Posterior vena cava (tissue), 2 donors: ENCODE measurements at regions of chr5 and their contacts with region 1.

Region 1: GRCh38 chr5:36599986-36600779 is 6.2 kb upstream of the SLC1A3 start:
- DNase-seq: no peak

Region 2: GRCh38 chr5:36619012-36619635 is 18.9 kb after region 1 on chr5:
- intact Hi-C with region 1: loop called in 1 of 2 experiments (anchors 2 kb)
- DNase-seq: no peak

Region 3: DNA sequence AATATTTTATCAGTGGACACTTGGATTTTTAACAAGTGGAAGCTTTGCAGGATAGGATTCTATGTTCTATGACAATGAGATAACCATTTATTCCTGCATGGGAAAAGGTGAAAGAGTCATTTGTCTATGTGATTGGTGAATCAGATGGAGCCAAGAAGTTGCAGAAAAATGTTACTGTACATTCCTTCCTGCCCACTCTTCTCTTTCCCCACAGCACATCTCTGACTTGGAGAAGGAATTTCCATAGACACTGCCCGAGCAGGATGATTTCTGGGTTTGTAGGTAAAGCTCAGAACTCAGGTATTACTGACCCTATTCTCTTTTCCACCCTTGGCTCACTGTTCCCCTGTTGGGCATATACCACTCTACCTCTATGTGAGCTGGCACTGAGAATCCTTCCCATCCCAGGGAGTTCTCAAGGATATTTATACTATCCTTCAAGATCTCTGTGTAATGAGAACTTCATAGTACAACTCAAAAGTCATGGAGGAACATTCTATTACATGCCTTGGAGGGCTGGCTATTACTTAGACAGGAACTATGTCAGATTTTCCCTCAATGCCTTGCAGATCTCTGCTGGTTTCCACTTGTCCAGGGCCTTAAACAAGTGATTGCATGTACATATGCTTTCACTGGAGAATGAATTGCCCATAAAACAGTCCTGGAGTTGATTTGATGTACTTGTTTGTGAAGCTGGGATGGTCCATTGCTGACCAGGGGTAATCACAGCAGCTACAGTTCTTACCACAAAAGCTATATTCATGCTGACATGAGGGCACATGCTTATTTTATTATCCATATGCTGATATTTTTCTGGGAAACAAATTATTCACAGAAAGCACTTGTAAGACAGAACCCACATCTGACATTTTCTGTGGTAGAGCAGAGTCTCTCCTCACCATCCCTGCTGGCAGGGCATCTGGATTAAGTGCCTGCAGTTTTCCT is 30.3 kb after region 1 on chr5:
- intact Hi-C with region 1: no loop called
- DNase-seq: no peak

Region 4: DNA sequence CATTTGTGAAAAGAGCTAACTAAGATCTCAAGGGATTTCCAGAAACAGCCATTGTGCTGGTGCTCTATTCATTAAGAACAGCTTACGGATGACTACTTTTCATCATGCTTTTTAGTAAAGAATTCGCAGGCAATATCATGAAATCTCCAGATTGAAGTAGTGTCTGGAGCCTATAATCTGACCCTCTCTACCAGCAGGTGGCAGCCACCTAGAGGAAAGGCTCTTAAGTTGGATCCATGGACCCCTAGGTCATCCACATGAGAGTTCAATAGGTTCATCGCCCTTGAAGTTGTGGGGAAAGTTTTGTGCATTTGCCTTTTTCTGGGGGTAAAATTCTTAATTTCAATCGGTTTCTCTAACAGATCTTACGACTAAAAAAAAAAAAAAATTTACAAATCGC is 88.5 kb after region 1 on chr5:
- intact Hi-C with region 1: no loop called
- DNase-seq: no peak

Region 5: GRCh38 chr5:36790838-36791237 is 190.7 kb after region 1 on chr5:
- intact Hi-C with region 1: no loop called
- DNase-seq: no peak